Activated B cell treated with CpG ODN at 0.5 μM for 24 hours (primary cell): ENCODE measurements at regions of chr3 and their contacts with region 1.

Region 1: GRCh38 chr3:41198950-41199865 is at the start of gene CTNNB1:
- DNase-seq: peak; percentile 91
- ATAC-seq: peak; percentile 80
- H3K4me3 Mint-ChIP-seq: peak within 1 kb of the TSS; percentile 94
- H3K27ac Mint-ChIP-seq: peak within 1 kb of the TSS; percentile 96
- H3K4me1 Mint-ChIP-seq: peaks cover 40% of the 10 kb centered on the region
- H3K27me3 Mint-ChIP-seq: peaks cover 4% of the 10 kb centered on the region
- CTCF ChIP-seq: no peak
- total RNA-seq, gene CTNNB1: 155 and 164 TPM in 2 replicates

Region 2: GRCh38 chr3:40452876-40453730 is 746.1 kb before region 1 on chr3:
- CTCF ChIA-PET with region 1: no interaction called
- POLR2A ChIA-PET with region 1: interaction called, 15 read pairs
- intact Hi-C with region 1: loop called (anchors 5 kb)
- DNase-seq: peak; percentile 81
- ATAC-seq: peak; percentile 92
- H3K4me3 Mint-ChIP-seq: peak overlapping the region; percentile 96
- H3K27ac Mint-ChIP-seq: peak overlapping the region; percentile 98
- H3K4me1 Mint-ChIP-seq: peaks cover 36% of the 10 kb centered on the region
- H3K27me3 Mint-ChIP-seq: no peaks in the 10 kb centered on the region
- CTCF ChIP-seq: no peak

Region 3: GRCh38 chr3:40971191-40972168 is 227.7 kb before region 1 on chr3:
- CTCF ChIA-PET with region 1: interaction called, 3 read pairs
- POLR2A ChIA-PET with region 1: interaction called, 42 read pairs
- intact Hi-C with region 1: loop called (anchors 1 kb)
- DNase-seq: peak; percentile 38
- ATAC-seq: peak; percentile 80
- H3K4me3 Mint-ChIP-seq: peak overlapping the region; percentile 60
- H3K27ac Mint-ChIP-seq: peak overlapping the region; percentile 98
- H3K4me1 Mint-ChIP-seq: peaks cover 78% of the 10 kb centered on the region
- H3K27me3 Mint-ChIP-seq: no peaks in the 10 kb centered on the region
- CTCF ChIP-seq: no peak

Region 4: GRCh38 chr3:41299036-41299435 is 99.8 kb after region 1 on chr3:
- CTCF ChIA-PET with region 1: no interaction called
- POLR2A ChIA-PET with region 1: interaction called, 11 read pairs
- intact Hi-C with region 1: no loop called
- DNase-seq: no peak
- ATAC-seq: no peak
- H3K4me3 Mint-ChIP-seq: no peak overlapping the region
- H3K27ac Mint-ChIP-seq: no peak overlapping the region
- H3K4me1 Mint-ChIP-seq: no peaks in the 10 kb centered on the region
- H3K27me3 Mint-ChIP-seq: no peaks in the 10 kb centered on the region
- CTCF ChIP-seq: no peak

Region 5: DNA sequence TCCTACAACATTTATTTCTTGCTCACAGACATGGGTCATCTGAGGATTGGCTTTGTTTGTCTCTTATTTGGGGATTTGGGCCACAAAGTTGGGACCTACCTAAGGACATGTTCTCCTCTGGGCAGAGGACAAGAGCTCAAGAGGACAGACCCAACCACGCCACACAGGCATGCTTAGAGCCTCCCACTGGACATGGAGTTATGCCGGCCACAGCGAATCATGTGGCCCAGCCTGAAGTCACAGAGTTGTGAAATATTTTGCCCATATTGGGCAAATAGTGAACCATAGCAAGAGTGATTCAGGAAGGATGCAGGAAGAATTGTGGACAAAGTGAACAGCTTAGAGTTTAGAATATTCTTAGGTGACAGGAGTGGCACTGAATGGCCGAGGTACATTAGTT is 901.8 kb after region 1 on chr3:
- CTCF ChIA-PET with region 1: no interaction called
- POLR2A ChIA-PET with region 1: no interaction called
- intact Hi-C with region 1: loop called (anchors 10 kb)
- DNase-seq: no peak
- ATAC-seq: no peak
- H3K4me3 Mint-ChIP-seq: no peak overlapping the region
- H3K27ac Mint-ChIP-seq: peak overlapping the region; percentile 24
- H3K4me1 Mint-ChIP-seq: peaks cover 37% of the 10 kb centered on the region
- H3K27me3 Mint-ChIP-seq: no peaks in the 10 kb centered on the region
- CTCF ChIP-seq: no peak